Activated T-helper 2 cell treated with anti-CD3 and anti-CD28 coated beads, Interferon-gamma antibody, Interleukin-2, Interleukin-4, amounts not matched to agents 10 μg/mL and 5 μg/mL and 100 μg/mL, durations not matched to agents 14 hours and 24 hours and 36 hours (primary cell): ENCODE measurements at regions of chr16 and their contacts with region 1.

Region 1: DNA sequence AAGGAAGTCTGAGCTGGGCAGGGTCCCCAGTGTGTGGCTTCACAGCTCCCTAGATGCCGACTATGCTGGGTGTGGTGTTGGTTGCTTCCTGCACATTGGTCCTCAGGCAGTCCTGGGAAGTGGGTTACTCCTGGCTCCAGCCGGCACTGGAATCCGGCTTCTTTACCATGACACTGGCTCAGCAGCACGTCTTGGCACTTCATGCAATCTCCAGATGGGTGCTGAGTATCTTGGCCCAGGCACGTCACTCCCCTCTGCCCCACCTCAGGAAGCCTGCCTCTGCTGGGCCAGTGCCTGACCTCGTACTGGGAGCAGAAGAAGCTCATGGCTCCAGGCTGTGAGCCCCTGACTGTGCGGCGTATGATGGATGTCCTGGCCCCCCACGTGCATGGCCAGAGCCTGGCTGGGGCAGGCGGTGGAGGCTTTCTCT is 24.5 kb downstream of the FCSK start:
- DNase-seq: no peak
- H3K4me3 Mint-ChIP-seq: no peak overlapping the region
- H3K27ac Mint-ChIP-seq: peak overlapping the region; percentile 28
- H3K4me1 Mint-ChIP-seq: peaks cover 18% of the 10 kb centered on the region
- H3K27me3 Mint-ChIP-seq: no peaks in the 10 kb centered on the region

Region 2: GRCh38 chr16:70348991-70349390 is 129.9 kb before region 1 on chr16:
- intact Hi-C with region 1: no loop called
- DNase-seq: no peak
- H3K4me3 Mint-ChIP-seq: no peak overlapping the region
- H3K27ac Mint-ChIP-seq: peak overlapping the region; percentile 28
- H3K4me1 Mint-ChIP-seq: peaks cover 24% of the 10 kb centered on the region
- H3K27me3 Mint-ChIP-seq: no peaks in the 10 kb centered on the region

Region 3: DNA sequence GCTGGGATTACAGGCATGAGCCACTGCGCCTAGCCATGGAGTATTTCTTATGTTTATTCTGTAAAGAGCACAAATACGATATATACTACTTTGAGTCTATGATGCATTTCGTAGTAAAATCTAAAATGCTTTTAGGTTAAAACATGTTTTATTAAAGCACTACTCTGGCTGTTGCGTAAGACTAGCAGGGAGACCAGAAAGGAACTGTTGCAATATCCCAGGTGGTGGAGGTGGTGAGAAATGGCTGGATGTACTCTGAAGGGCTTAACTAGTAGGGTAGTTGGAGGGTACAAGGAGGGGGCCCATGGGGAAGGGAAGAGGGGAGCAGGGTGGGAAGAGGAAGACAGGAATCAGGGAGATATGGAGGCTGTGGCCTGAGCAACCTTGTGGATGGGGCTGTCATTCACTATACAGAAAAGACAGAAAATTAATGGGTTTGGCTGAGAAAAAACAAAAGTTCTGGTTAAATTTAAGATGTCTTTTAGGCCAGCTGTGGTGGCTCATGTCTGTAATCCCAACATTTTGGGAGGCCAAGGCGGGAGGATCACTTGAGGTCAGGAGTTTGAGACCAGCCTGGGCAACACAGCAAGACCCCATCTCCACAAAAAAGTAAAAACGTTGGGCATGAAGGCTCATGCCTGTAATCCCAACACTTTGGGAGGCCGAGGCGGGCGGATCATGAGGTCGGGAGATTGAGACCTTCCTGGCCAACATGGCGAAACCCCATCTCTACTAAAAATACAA is 75.8 kb before region 1 on chr16:
- intact Hi-C with region 1: loop called (anchors 5 kb)
- DNase-seq: no peak
- H3K4me3 Mint-ChIP-seq: no peak overlapping the region
- H3K27ac Mint-ChIP-seq: peak overlapping the region; percentile 8
- H3K4me1 Mint-ChIP-seq: peaks cover 36% of the 10 kb centered on the region
- H3K27me3 Mint-ChIP-seq: no peaks in the 10 kb centered on the region